Adrenal gland (tissue), 19 donors: ENCODE measurements at regions of chr1 and their contacts with region 1.

Region 1: GRCh38 chr1:226608699-226609505 is 60.3 kb downstream of the STUM start:
- DNase-seq: peak; percentile 56 to 81 (median 72)
- H3K4me3 ChIP-seq: no peak overlapping the region
- H3K27ac ChIP-seq: no peak overlapping the region
- H3K4me1 ChIP-seq: no peaks in the 10 kb centered on the region
- H3K27me3 ChIP-seq: peaks cover 6% of the 10 kb centered on the region
- CTCF ChIP-seq: peak; percentile 52 to 85 (median 75)
- POLR2A ChIP-seq: no peak

Region 2: GRCh38 chr1:226424228-226425003 is 184.5 kb before region 1 on chr1:
- intact Hi-C with region 1: loop called (anchors 5 to 10 kb)
- DNase-seq: no peak
- H3K4me3 ChIP-seq: no peak overlapping the region
- H3K27ac ChIP-seq: no peak overlapping the region
- H3K4me1 ChIP-seq: no peaks in the 10 kb centered on the region
- H3K27me3 ChIP-seq: no peaks in the 10 kb centered on the region
- CTCF ChIP-seq: peak; percentile 37 to 69 (median 62)
- POLR2A ChIP-seq: no peak

Region 3: GRCh38 chr1:226547754-226548191 is 61.1 kb before region 1 on chr1:
- intact Hi-C with region 1: loop called (anchors 5 kb)
- DNase-seq: peak; percentile 76 to 93 (median 87)
- H3K4me3 ChIP-seq: peak overlapping the region in 1 of 4 donors; percentile 64
- H3K27ac ChIP-seq: no peak overlapping the region
- H3K4me1 ChIP-seq: peaks cover 18 to 21% of the 10 kb centered on the region in 2 donors
- H3K27me3 ChIP-seq: peaks cover 16% of the 10 kb centered on the region
- CTCF ChIP-seq: peak; percentile 83 to 91 (median 88)
- POLR2A ChIP-seq: peak in 1 of 2 donors; percentile 14

Region 4: DNA sequence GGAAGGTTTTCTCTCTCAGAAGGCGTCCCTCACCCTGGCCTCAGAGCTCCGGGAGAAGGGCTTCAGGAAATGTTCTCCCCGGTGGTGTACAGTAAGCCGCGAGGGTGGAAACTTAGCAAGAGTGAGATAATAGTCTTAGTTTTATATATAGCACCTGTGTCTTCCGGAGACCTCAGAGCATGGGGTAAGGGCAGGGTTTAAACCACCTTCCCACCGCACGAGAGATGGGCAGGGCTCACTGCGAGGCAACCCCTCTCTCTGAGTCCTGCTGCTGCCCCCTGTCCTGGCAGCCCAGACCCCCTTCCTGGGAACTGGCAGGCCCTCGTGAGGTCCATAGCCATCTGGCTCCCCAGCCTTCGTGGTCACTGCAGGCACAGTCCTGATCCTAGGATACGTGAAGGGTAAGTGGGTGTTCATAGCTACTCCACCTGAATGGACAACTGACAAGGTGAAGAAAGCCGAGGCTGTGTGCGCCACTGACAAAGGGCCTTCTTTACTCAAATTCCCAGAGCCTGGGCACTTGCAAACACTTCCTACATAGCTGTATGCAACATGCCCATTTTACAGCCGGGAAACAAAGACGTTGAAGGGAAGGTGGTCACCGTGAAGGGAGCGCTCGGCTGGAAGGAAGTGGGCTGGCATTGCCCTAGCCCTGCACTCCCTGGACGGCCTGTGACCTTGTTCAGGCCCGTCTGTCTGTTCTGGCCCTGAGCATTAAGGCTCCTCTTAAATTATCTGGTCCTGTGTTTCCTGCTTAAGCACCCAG is 103.3 kb after region 1 on chr1:
- intact Hi-C with region 1: no loop called
- DNase-seq: no peak
- H3K4me3 ChIP-seq: no peak overlapping the region
- H3K27ac ChIP-seq: peak overlapping the region in 1 of 5 donors; percentile 32
- H3K4me1 ChIP-seq: peaks cover 0 to 4% of the 10 kb centered on the region in 2 donors
- H3K27me3 ChIP-seq: no peaks in the 10 kb centered on the region
- CTCF ChIP-seq: no peak
- POLR2A ChIP-seq: no peak